ENCODE measurements at regions of chr6 and their contacts with region 1.

Region 1: DNA sequence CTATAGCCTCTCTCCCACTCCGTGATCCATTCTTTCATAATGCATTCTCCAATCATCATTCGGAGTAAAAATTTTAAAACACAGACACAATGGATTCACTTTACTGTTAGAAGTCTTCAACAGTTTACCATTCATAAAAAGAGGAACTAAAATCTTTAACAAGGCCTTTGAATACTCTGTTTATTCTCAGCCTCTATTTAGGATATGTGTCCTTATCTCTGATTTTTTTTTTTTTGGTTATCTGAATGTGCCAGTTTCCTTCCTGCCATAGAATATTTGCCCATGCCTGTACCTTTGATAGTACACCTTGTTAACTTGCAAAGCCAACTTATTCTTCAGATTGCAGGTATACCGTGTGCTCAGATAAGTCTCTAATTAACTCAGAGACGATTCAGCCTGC is 11.1 kb downstream of the CRISP1 start:
- DNase-seq: no peak
- ATAC-seq: no peak
- H3K4me3 Mint-ChIP-seq: no peak overlapping the region
- H3K27ac Mint-ChIP-seq: no peak overlapping the region
- H3K4me1 Mint-ChIP-seq: no peaks in the 10 kb centered on the region
- H3K27me3 Mint-ChIP-seq: no peaks in the 10 kb centered on the region
- CTCF ChIP-seq: no peak

Region 2: GRCh38 chr6:49625140-49625539 is 230.1 kb before region 1 on chr6:
- CTCF ChIA-PET with region 1: no interaction called
- POLR2A ChIA-PET with region 1: no interaction called
- intact Hi-C with region 1: loop called (anchors 2 kb)
- DNase-seq: no peak
- ATAC-seq: no peak
- H3K4me3 Mint-ChIP-seq: no peak overlapping the region
- H3K27ac Mint-ChIP-seq: no peak overlapping the region
- H3K4me1 Mint-ChIP-seq: no peaks in the 10 kb centered on the region
- H3K27me3 Mint-ChIP-seq: no peaks in the 10 kb centered on the region
- CTCF ChIP-seq: no peak

Region 3: GRCh38 chr6:50047026-50047425 is 191.8 kb after region 1 on chr6:
- CTCF ChIA-PET with region 1: no interaction called
- POLR2A ChIA-PET with region 1: no interaction called
- intact Hi-C with region 1: no loop called
- DNase-seq: no peak
- ATAC-seq: no peak
- H3K4me3 Mint-ChIP-seq: no peak overlapping the region
- H3K27ac Mint-ChIP-seq: no peak overlapping the region
- H3K4me1 Mint-ChIP-seq: no peaks in the 10 kb centered on the region
- H3K27me3 Mint-ChIP-seq: no peaks in the 10 kb centered on the region
- CTCF ChIP-seq: no peak

Measured in activated CD8-positive, alpha-beta T cell treated with anti-CD3 and anti-CD28 coated beads for 36 hours (primary cell).